ENCODE measurements at regions of chr15 and their contacts with region 1.

Region 1: DNA sequence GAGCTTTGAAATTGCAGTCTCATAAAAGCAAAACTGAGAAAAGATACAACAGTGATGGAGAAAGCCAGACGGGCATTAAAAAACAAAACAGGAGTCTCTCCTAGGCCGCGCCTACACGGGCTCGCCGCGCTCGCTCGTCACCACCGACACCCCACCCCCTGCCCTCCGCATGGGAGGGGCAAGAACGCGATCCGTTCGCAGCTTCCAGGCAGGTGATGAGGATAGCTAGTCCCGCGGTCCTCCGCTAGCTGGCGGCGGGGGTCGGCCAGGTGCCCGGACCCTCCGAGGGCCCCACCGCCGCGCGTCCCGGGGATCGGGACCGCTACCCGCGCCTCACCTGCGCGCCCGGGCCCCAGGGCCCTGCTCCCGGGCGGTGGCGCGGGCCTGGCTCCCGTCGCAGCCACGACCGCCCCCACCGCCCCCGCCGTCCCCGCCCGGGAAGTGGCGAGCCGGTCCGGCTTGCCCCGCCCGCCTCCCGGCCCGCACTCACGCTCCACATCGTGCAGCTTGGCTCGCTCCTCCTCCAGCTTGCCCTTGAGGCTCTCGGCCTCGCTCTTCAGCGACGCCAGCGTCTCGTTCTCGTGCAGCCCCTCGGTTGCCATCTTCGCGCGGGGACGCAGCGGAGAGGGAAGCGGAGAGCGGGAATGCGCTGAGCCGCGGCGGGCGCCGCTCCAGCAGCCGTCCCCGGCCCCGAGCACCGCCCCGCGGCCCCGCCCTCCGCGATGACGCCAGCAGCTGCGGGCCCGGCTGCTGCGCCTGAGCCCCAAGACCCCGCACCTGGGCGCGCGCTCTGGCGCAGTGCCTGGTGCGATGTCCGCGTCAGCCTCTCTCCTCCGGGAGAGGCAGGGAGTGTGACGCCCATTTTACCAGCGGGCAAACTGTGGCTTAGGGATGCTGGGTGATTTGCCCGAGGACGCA is 11.7 kb downstream of the GNB5 start:
- DNase-seq: peak; percentile 93
- ATAC-seq: peak; percentile 89
- H3K4me3 Mint-ChIP-seq: peak overlapping the region; percentile 82
- H3K27ac Mint-ChIP-seq: peak overlapping the region; percentile 97
- H3K4me1 Mint-ChIP-seq: peaks cover 22% of the 10 kb centered on the region
- H3K27me3 Mint-ChIP-seq: no peaks in the 10 kb centered on the region

Region 2: DNA sequence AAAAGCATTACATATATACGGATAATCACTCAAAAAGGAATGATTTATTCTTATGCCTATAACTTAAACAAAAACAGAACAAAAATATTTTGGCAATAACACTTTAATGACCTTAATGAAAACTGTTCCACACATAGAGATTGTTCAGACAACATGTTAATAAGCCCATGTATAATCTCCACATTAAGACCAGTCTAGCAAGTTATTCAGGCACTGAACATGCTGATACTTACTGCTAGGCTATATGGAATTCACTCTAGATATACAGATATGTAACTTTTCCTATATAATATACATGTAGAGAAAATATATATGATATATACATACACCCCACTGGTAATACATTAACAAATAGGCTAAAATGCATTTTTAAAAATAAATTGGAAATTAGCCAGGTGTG is 1589.2 kb before region 1 on chr15:
- CTCF ChIA-PET with region 1: no interaction called
- POLR2A ChIA-PET with region 1: no interaction called
- intact Hi-C with region 1: no loop called
- DNase-seq: no peak
- ATAC-seq: no peak
- H3K4me3 Mint-ChIP-seq: no peak overlapping the region
- H3K27ac Mint-ChIP-seq: no peak overlapping the region
- H3K4me1 Mint-ChIP-seq: no peaks in the 10 kb centered on the region
- H3K27me3 Mint-ChIP-seq: no peaks in the 10 kb centered on the region

Region 3: DNA sequence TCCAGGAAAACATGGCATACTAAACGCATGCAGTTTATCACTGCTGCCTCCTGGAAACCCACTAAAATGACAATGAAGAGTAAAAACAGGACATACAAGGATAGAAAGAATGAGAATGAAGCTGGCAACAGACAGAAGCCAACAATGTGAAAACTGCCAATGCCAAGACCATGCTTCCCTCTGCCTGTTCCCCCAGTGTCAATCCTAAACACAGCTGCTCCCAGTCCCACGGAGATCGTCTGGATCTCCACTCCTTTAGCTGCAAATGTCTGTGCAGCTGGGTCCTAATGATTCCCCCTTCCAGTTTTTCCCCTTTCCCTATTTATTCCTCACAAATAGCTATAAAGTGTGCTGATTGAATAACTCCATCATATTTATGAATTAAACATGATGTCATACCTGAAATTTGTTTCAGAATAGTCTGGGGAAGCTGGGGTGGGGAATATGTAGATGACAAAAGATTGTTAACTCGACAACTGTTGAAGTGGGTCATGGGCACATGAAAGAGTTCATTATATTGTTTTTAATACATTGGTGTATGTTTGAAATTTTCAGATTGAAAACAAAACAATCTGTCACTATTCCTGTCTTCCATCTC is 223.9 kb before region 1 on chr15:
- CTCF ChIA-PET with region 1: no interaction called
- POLR2A ChIA-PET with region 1: no interaction called
- intact Hi-C with region 1: no loop called
- DNase-seq: no peak
- ATAC-seq: no peak
- H3K4me3 Mint-ChIP-seq: no peak overlapping the region
- H3K27ac Mint-ChIP-seq: no peak overlapping the region
- H3K4me1 Mint-ChIP-seq: no peaks in the 10 kb centered on the region
- H3K27me3 Mint-ChIP-seq: no peaks in the 10 kb centered on the region

Region 4: GRCh38 chr15:52018693-52019387 is 160.7 kb before region 1 on chr15 and contains the start of gene MAPK6:
- CTCF ChIA-PET with region 1: no interaction called
- POLR2A ChIA-PET with region 1: no interaction called
- intact Hi-C with region 1: loop called in 1 of 2 experiments (anchors 1 kb)
- DNase-seq: peak; percentile 97
- ATAC-seq: peak; percentile 76
- H3K4me3 Mint-ChIP-seq: peak within 1 kb of the TSS; percentile 86
- H3K27ac Mint-ChIP-seq: peak within 1 kb of the TSS; percentile 96
- H3K4me1 Mint-ChIP-seq: peaks cover 38% of the 10 kb centered on the region
- H3K27me3 Mint-ChIP-seq: peaks cover 5% of the 10 kb centered on the region
- total RNA-seq, gene MAPK6: 27.3 to 28.1 TPM

Region 5: DNA sequence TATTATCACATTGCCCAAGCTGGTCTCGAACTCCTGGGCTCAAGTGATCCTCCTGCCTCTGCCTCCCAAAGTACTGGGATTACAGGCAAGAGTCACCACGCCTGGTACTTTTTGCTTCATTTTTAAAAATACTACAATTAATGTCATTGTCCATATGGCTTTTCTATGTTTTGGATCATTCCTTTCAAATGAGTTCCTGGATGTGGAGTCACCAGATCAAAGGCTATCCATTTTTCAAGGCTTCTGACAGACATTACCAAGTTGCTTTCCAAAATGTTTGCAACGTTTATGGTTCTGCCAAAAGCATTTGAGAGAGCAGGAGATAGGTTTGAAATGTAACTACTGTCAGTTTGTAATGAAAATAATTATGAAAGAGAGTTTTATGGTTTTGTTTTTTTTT is 32.8 kb before region 1 on chr15:
- CTCF ChIA-PET with region 1: no interaction called
- POLR2A ChIA-PET with region 1: no interaction called
- intact Hi-C with region 1: no loop called
- DNase-seq: no peak
- ATAC-seq: no peak
- H3K4me3 Mint-ChIP-seq: no peak overlapping the region
- H3K27ac Mint-ChIP-seq: no peak overlapping the region
- H3K4me1 Mint-ChIP-seq: no peaks in the 10 kb centered on the region
- H3K27me3 Mint-ChIP-seq: no peaks in the 10 kb centered on the region

Region 6: GRCh38 chr15:52208306-52208946 is 28.9 kb after region 1 on chr15:
- CTCF ChIA-PET with region 1: interaction called, 17 read pairs
- POLR2A ChIA-PET with region 1: no interaction called
- intact Hi-C with region 1: loop called in 1 of 2 experiments (anchors 1 kb)
- DNase-seq: peak; percentile 88
- ATAC-seq: peak; percentile 99
- H3K4me3 Mint-ChIP-seq: no peak overlapping the region
- H3K27ac Mint-ChIP-seq: no peak overlapping the region
- H3K4me1 Mint-ChIP-seq: no peaks in the 10 kb centered on the region
- H3K27me3 Mint-ChIP-seq: no peaks in the 10 kb centered on the region

Region 7: GRCh38 chr15:52568601-52569256 is 389.2 kb after region 1 on chr15 and contains the start of gene ARPP19:
- CTCF ChIA-PET with region 1: no interaction called
- POLR2A ChIA-PET with region 1: no interaction called
- intact Hi-C with region 1: loop called in 1 of 2 experiments (anchors 1 kb)
- DNase-seq: peak; percentile 90
- ATAC-seq: peak; percentile 83
- H3K4me3 Mint-ChIP-seq: peak within 1 kb of the TSS; percentile 96
- H3K27ac Mint-ChIP-seq: peak within 1 kb of the TSS; percentile 97
- H3K4me1 Mint-ChIP-seq: peaks cover 27% of the 10 kb centered on the region
- H3K27me3 Mint-ChIP-seq: no peaks in the 10 kb centered on the region
- total RNA-seq, gene ARPP19: 141 to 185 TPM

Measured in activated CD4-positive, alpha-beta T cell treated with anti-CD3 and anti-CD28 coated beads for 36 hours (primary cell).